H1 (cell line): ENCODE measurements at regions of chr19 and their contacts with region 1.

Region 1: DNA sequence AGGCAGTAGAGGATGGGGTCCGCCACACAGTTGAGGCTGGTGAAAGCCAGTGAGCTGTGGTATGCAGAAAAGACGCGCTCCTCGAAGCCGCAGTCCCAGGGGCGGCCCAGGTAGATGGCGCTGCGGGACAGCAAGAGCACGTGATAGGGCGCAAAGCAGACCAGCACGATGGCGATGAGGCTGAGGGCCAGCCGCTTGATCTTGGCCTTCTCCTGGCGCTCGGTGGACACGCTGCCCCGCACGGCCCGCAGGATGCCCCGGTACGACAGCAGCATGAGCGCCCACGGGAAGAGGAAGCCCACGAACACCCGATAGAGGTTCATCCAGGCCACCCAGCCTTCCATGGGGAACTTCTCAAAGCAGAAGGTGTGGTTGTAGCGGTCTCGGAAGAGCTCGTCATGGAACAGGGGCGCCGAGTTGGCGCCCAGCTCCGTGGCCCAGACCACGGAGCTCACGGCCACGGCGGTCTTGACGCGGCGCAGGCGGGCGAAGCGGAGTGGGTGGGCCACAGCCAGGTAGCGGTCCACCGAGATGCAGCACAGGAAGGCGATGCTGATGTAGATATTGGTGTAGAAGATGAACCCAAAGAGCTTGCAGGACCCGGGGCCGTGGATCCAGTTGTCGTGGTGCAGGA is 6.5 kb upstream of the OPA3 start:
- DNase-seq: peak in 1 of 2 experiments; percentile 81
- H3K4me3 ChIP-seq: no peak overlapping the region
- H3K27ac ChIP-seq: no peak overlapping the region
- H3K4me1 ChIP-seq: 0 out of 7 replicates have a peak, but pooled peaks cover 0 to 2% (median 0%) of the 10 kb centered on the region in 4 experiments
- H3K27me3 ChIP-seq: peaks cover 0 to 21% (median 16%) of the 10 kb centered on the region in 4 experiments; a peak in 6 of 7 replicates
- CTCF ChIP-seq: peak; percentile 78 to 84 (median 78)
- EP300 ChIP-seq: no peak
- POLR2A ChIP-seq: no peak
- RAD21 ChIP-seq: peak; percentile 80 to 83

Region 2: GRCh38 chr19:45607071-45608029 is 16.2 kb after region 1 on chr19:
- CTCF ChIA-PET with region 1: interaction called, 17 read pairs
- POLR2A ChIA-PET with region 1: interaction called, 3 read pairs
- DNase-seq: peak; percentile 67 to 97
- H3K4me3 ChIP-seq: peak overlapping the region; percentile 34 to 57 (median 42); a peak in 6 of 8 replicates
- H3K27ac ChIP-seq: no peak overlapping the region
- H3K4me1 ChIP-seq: peaks cover 0 to 5% (median 2%) of the 10 kb centered on the region in 4 experiments; a peak in 5 of 7 replicates
- H3K27me3 ChIP-seq: peaks cover 0 to 9% (median 7%) of the 10 kb centered on the region in 4 experiments; a peak in 4 of 7 replicates
- CTCF ChIP-seq: peak; percentile 77 to 84 (median 83)
- EP300 ChIP-seq: no peak
- POLR2A ChIP-seq: peak in 1 of 2 experiments; percentile 63; a peak in 2 of 3 replicates
- RAD21 ChIP-seq: peak; percentile 67 to 77

Region 3: DNA sequence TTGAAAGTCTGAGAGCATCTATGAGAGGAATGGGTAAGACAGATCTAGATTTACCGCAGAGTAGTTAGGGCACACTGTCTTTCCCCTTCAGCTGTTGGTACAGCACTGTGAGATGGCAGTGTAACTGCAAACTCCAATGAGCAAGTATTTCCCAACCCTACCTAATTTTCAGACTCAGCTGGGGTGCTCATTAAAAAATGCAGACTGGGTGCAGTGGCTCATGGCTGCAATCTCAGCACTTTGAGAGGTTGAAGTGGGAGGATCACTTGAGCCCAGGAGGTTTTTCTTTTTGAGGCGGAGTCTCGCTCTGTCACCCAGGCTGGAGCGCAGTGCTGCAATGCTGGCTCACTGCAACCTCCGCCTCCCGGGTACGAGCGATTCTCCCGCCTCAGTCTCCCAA is 114.0 kb after region 1 on chr19:
- CTCF ChIA-PET with region 1: no interaction called
- POLR2A ChIA-PET with region 1: no interaction called
- DNase-seq: no peak
- H3K4me3 ChIP-seq: no peak overlapping the region
- H3K27ac ChIP-seq: no peak overlapping the region
- H3K4me1 ChIP-seq: no peaks in the 10 kb centered on the region
- H3K27me3 ChIP-seq: no peaks in the 10 kb centered on the region
- CTCF ChIP-seq: no peak
- EP300 ChIP-seq: no peak
- POLR2A ChIP-seq: no peak
- RAD21 ChIP-seq: no peak